ENCODE measurements at regions of chr14 and their contacts with region 1.

Region 1: DNA sequence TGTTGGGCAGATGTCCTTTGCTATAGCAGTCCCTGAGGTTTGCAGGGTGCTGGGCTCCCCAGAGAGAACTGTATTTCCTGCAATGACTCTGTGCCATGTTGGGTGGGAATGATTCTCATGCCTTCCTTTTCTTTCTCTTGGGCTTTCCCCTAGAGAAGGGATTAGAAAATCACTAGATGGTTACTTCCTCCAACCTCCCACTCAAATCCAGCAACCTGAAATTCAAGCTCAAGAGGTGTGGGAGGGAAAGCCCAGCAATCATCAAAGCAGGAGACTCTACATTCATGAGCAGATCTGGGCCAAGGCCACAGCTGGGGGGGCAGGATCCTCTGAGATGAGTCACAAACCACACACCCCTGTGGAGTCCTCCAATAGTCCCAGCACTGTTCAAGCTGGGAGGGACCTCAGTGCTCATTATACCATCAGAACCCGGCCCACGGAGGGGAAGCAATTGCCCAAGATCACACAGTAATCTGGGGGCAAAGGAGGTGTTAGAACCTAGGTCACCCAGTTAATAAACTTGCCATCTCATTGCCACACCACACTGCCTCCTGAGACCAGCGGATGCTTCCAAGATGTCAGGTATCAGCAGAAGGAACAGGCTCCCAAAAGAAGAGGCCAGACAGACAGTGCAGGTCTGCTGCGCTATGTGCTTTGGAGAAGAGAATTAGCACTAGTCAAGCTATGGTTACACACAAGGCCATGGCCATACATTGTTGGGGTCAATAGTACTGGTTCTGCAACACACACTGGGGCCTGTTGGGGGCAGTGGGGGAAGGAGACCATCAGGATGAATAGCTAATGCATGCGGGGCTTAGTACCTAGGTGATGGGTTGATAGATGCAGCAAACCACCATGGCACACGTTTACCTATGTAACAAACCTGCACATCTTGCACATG is 65.7 kb downstream of the TTC9 start:
- DNase-seq: peak; percentile 65 to 71
- H3K4me3 ChIP-seq: no peak overlapping the region
- H3K27ac ChIP-seq: no peak overlapping the region
- H3K4me1 ChIP-seq: peaks cover 21 to 55% of the 10 kb centered on the region in 2 donors
- H3K27me3 ChIP-seq: no peaks in the 10 kb centered on the region
- CTCF ChIP-seq: no peak
- POLR2A ChIP-seq: no peak

Region 2: GRCh38 chr14:70527501-70528105 is 179.8 kb before region 1 on chr14:
- intact Hi-C with region 1: no loop called
- DNase-seq: no peak
- H3K4me3 ChIP-seq: no peak overlapping the region
- H3K27ac ChIP-seq: no peak overlapping the region
- H3K4me1 ChIP-seq: no peaks in the 10 kb centered on the region
- H3K27me3 ChIP-seq: no peaks in the 10 kb centered on the region
- CTCF ChIP-seq: no peak
- POLR2A ChIP-seq: no peak

Region 3: GRCh38 chr14:70670992-70671651 is 36.3 kb before region 1 on chr14:
- intact Hi-C with region 1: loop called (anchors 5 kb)
- DNase-seq: no peak
- H3K4me3 ChIP-seq: no peak overlapping the region
- H3K27ac ChIP-seq: no peak overlapping the region
- H3K4me1 ChIP-seq: peaks cover 3 to 13% of the 10 kb centered on the region in 2 donors
- H3K27me3 ChIP-seq: no peaks in the 10 kb centered on the region
- CTCF ChIP-seq: no peak
- POLR2A ChIP-seq: no peak

Region 4: GRCh38 chr14:70858635-70859034 is 151.2 kb after region 1 on chr14:
- intact Hi-C with region 1: no loop called
- DNase-seq: no peak
- H3K4me3 ChIP-seq: no peak overlapping the region
- H3K27ac ChIP-seq: no peak overlapping the region
- H3K4me1 ChIP-seq: no peaks in the 10 kb centered on the region
- H3K27me3 ChIP-seq: no peaks in the 10 kb centered on the region
- CTCF ChIP-seq: no peak
- POLR2A ChIP-seq: no peak

Measured in thyroid gland (tissue), 4 donors.